ENCODE measurements at regions of chr5 and their contacts with region 1.

Region 1: DNA sequence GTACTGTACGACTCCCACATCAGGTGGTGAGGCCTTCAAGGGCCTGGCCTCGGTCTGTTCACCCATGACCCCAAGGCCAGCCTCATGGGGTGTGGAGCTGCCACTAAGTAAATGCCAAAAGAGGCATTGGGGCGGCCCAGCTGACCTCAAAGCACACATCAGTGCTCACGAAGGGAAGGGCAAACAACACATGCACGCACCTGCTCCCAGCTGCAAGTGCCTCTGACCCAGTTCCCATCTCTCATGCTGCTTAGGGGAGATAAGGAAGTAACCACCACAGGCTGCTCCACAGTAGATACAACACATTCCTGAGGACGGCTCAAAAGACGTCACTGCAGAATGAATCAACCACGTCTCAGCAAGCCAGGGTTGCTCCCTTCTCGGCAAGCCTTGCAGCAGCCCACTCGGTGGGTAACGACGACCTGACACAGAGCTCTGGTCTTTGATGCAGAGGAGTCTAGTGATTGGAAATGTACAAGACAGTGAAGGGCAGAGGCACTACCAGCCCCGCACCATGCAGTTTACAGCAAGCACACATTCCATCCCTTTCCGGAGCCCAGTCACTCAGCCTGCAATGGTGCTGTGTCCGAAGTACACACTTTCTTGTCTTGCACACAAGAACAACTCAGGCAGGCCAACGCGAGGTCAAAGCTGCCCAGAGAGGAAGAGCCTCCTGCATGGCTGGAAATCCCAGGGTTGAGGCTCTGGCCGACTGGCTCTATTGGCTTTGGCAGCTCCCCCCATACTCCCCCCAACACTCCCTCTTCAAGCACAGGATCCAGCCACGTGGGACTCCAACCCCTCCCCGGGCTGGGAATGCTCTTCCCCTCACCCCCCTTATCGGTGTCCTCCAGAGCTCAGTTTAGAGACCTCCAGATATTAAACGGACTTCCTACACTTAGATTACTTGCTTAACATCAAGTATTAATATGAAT is 31.8 kb downstream of the FABP6 start:
- DNase-seq: peak; percentile 88 to 97
- H3K4me3 ChIP-seq: peak overlapping the region; percentile 0; the same call in 1 of the 2 replicates
- H3K4me3 Mint-ChIP-seq: peak overlapping the region; percentile 73
- H3K27ac Mint-ChIP-seq: peak overlapping the region; percentile 100
- H3K4me1 ChIP-seq: peaks cover 45% of the 10 kb centered on the region
- H3K4me1 Mint-ChIP-seq: peaks cover 57% of the 10 kb centered on the region
- H3K27me3 ChIP-seq: no peaks in the 10 kb centered on the region
- H3K27me3 Mint-ChIP-seq: no peaks in the 10 kb centered on the region
- CTCF ChIP-seq: no peak

Region 2: GRCh38 chr5:160021831-160022446 is 239.2 kb before region 1 on chr5:
- CTCF ChIA-PET with region 1: no interaction called
- POLR2A ChIA-PET with region 1: no interaction called
- intact Hi-C with region 1: loop called (anchors 10 kb)
- DNase-seq: peak; percentile 56 to 71
- H3K4me3 ChIP-seq: no peak overlapping the region
- H3K4me3 Mint-ChIP-seq: no peak overlapping the region
- H3K27ac Mint-ChIP-seq: no peak overlapping the region
- H3K4me1 ChIP-seq: no peaks in the 10 kb centered on the region
- H3K4me1 Mint-ChIP-seq: peaks cover 7% of the 10 kb centered on the region
- H3K27me3 ChIP-seq: no peaks in the 10 kb centered on the region
- H3K27me3 Mint-ChIP-seq: no peaks in the 10 kb centered on the region
- CTCF ChIP-seq: peak; percentile 77 to 85

Region 3: GRCh38 chr5:160159991-160160792 is 101.0 kb before region 1 on chr5:
- CTCF ChIA-PET with region 1: no interaction called
- POLR2A ChIA-PET with region 1: interaction called, 5 read pairs
- intact Hi-C with region 1: loop called (anchors 1 kb)
- DNase-seq: peak; percentile 83 to 90
- H3K4me3 ChIP-seq: no peak overlapping the region
- H3K4me3 Mint-ChIP-seq: peak overlapping the region; percentile 25
- H3K27ac Mint-ChIP-seq: peak overlapping the region; percentile 87
- H3K4me1 ChIP-seq: peaks cover 36% of the 10 kb centered on the region
- H3K4me1 Mint-ChIP-seq: peaks cover 22% of the 10 kb centered on the region
- H3K27me3 ChIP-seq: no peaks in the 10 kb centered on the region
- H3K27me3 Mint-ChIP-seq: no peaks in the 10 kb centered on the region
- CTCF ChIP-seq: no peak

Region 4: GRCh38 chr5:160209963-160210374 is 51.2 kb before region 1 on chr5:
- CTCF ChIA-PET with region 1: no interaction called
- POLR2A ChIA-PET with region 1: no interaction called
- intact Hi-C with region 1: loop called (anchors 1 kb)
- DNase-seq: peak; percentile 75 to 77
- H3K4me3 ChIP-seq: no peak overlapping the region
- H3K4me3 Mint-ChIP-seq: peak overlapping the region; percentile 8
- H3K27ac Mint-ChIP-seq: peak overlapping the region; percentile 65
- H3K4me1 ChIP-seq: peaks cover 26% of the 10 kb centered on the region
- H3K4me1 Mint-ChIP-seq: peaks cover 22% of the 10 kb centered on the region
- H3K27me3 ChIP-seq: no peaks in the 10 kb centered on the region
- H3K27me3 Mint-ChIP-seq: no peaks in the 10 kb centered on the region
- CTCF ChIP-seq: no peak

Region 5: GRCh38 chr5:160280384-160281095 is 19.4 kb after region 1 on chr5:
- CTCF ChIA-PET with region 1: no interaction called
- POLR2A ChIA-PET with region 1: no interaction called
- intact Hi-C with region 1: loop called (anchors 1 kb)
- DNase-seq: peak; percentile 62 to 73
- H3K4me3 ChIP-seq: no peak overlapping the region
- H3K4me3 Mint-ChIP-seq: no peak overlapping the region
- H3K27ac Mint-ChIP-seq: peak overlapping the region; percentile 48
- H3K4me1 ChIP-seq: peaks cover 29% of the 10 kb centered on the region
- H3K4me1 Mint-ChIP-seq: peaks cover 24% of the 10 kb centered on the region
- H3K27me3 ChIP-seq: no peaks in the 10 kb centered on the region
- H3K27me3 Mint-ChIP-seq: no peaks in the 10 kb centered on the region
- CTCF ChIP-seq: no peak

Measured in Caco-2 (cell line).